ENCODE measurements at regions of chr2 and their contacts with region 1.

Region 1: GRCh38 chr2:628651-629050 is 48.6 kb downstream of the TMEM18 start:
- DNase-seq: peak; percentile 94
- ATAC-seq: peak; percentile 100
- H3K4me3 ChIP-seq: peak overlapping the region; percentile 58
- H3K27ac ChIP-seq: peak overlapping the region; percentile 92
- H3K4me1 ChIP-seq: peaks cover 12% of the 10 kb centered on the region
- H3K27me3 ChIP-seq: no peaks in the 10 kb centered on the region
- CTCF ChIP-seq: no peak

Region 2: DNA sequence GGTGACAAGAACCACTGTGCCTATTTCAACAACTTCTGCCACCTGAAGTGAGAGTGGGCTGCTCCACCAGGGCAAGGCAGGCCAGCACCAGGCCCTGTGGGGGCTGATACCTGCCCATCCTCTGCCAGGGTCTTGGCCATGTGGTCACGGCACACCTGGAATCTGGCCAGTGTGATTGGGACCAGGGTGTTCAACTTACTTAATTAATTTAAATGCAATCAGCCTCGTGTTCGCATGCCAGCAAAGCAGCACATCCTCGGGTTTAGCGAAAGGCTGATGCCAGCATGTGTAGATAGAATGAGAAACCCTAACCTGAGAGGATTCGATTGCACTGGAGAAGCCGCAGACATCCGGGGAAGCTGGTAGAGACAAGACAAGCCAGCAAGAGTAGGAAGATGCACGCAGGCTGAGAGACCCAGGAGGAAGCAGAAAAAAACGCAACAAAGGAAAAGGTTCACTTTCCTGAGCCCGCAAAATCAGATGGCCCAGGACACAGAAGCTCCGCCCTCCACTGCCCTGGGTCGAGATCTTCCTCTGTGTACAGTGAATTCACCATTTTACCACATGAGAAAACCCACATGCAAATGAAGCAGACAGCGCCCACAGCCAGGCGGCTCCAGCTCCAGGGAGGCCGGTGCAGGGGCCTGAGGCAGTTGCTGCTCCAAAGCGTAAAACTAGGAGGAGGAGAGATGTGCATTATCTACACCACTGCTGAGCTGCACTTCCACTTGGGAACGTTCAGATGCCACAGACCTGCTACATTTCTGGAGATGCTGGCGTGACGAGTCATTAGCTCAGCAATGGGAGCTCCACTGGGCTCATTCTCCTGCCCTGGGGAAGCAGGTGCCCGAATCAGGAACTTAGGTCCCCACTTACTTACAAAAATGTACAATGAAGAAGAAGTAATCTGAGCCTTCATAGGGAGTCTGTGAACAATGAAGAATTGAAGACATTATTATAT is 43.5 kb before region 1 on chr2:
- CTCF ChIA-PET with region 1: no interaction called
- POLR2A ChIA-PET with region 1: no interaction called
- intact Hi-C with region 1: loop called (anchors 5 kb)
- DNase-seq: peak; percentile 11
- ATAC-seq: no peak; the same call in 1 of the 2 replicates
- H3K4me3 ChIP-seq: no peak overlapping the region
- H3K27ac ChIP-seq: no peak overlapping the region
- H3K4me1 ChIP-seq: peaks cover 5% of the 10 kb centered on the region; the same call in 1 of the 2 replicates
- H3K27me3 ChIP-seq: no peaks in the 10 kb centered on the region
- CTCF ChIP-seq: no peak

Region 3: DNA sequence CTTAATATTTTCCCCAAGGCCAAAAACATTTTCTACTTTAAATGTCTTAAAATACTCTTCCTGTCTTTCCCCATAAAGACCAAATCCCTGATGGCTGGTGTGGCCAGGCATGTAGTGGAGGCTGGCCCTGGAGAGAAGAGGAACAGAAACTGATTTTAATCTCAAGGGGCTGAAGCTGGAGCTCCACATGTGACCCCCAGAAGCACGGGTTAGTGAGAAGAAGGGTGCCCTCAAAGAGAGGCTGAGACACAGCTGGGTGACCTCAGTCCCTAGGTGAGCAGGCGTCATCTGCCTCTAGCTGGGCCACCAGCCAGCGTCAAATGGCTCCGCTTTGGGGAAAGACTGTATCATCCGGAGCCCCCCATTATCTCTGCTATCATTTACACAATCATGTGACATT is 67.8 kb after region 1 on chr2:
- CTCF ChIA-PET with region 1: no interaction called
- POLR2A ChIA-PET with region 1: no interaction called
- intact Hi-C with region 1: no loop called
- DNase-seq: no peak
- ATAC-seq: no peak
- H3K4me3 ChIP-seq: no peak overlapping the region
- H3K27ac ChIP-seq: no peak overlapping the region
- H3K4me1 ChIP-seq: peaks cover 31% of the 10 kb centered on the region
- H3K27me3 ChIP-seq: no peaks in the 10 kb centered on the region
- CTCF ChIP-seq: no peak

Region 4: DNA sequence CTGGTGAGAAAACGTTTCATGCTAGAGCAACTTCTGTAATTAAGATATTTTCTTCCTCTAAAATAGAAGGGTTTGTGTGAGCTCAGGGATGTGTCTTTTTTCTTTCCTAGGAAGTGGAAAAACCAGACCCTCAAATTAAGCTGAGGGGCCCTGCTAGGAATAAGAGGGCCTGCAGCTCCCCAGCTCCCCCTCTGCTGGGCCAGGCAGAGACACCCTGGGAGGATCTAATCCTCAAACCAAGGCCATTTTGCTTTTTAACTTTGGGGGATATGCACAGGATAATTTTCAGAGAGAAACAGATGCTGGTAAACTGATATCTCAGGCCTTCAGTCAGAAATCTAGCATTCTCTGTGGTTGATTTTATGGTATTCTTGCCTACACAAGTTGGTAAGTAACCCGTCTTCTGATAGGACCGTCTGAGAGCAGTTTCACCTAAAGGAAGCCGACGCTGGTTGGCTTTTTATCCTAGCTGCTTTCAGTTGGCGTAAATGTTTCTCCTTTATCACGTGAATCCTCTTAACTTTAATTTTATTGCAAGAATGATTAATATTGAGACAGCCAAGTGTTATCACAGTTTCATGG is 356.8 kb after region 1 on chr2:
- CTCF ChIA-PET with region 1: no interaction called
- POLR2A ChIA-PET with region 1: no interaction called
- intact Hi-C with region 1: no loop called
- DNase-seq: no peak
- ATAC-seq: no peak
- H3K4me3 ChIP-seq: no peak overlapping the region
- H3K27ac ChIP-seq: no peak overlapping the region
- H3K4me1 ChIP-seq: no peaks in the 10 kb centered on the region
- H3K27me3 ChIP-seq: peaks cover 71% of the 10 kb centered on the region
- CTCF ChIP-seq: no peak

Region 5: GRCh38 chr2:1268034-1268433 is 639.4 kb after region 1 on chr2:
- CTCF ChIA-PET with region 1: no interaction called
- POLR2A ChIA-PET with region 1: no interaction called
- intact Hi-C with region 1: no loop called
- DNase-seq: no peak
- ATAC-seq: no peak
- H3K4me3 ChIP-seq: no peak overlapping the region
- H3K27ac ChIP-seq: no peak overlapping the region
- H3K4me1 ChIP-seq: no peaks in the 10 kb centered on the region
- H3K27me3 ChIP-seq: peaks cover 90% of the 10 kb centered on the region
- CTCF ChIP-seq: no peak

Measured in PC-3 (cell line).